ENCODE measurements at regions of chr10 and their contacts with region 1.

Region 1: DNA sequence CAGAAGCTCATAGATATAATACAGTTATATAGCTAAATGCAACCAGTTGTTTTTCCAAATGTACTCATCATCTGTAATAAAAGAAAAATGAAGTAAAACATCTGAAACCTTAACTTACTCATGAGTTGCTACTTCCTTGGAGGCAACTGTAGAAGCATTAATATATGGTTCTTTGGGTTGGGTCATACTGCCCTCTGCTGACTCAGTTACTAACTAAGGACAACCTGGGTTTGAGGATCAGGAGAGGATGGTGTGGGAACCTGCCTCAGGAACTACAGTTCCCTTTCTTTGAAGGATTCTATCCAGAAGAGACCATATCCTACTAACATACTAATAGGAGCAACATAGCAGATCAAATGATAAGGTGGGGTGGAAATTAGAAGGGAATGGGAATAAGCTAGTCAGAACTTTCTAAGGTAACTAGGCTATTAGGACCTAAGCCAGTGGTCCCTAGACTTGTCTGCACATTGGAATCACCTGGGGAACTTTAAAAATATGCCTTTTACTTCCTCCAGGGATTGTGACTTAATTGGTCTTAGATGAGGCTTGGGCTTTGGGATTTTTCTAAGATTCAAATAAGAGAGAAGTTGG is 20.7 kb downstream of the COX15 start:
- DNase-seq: peak in 1 of 2 donors; percentile 34
- H3K4me3 ChIP-seq: no peak overlapping the region
- CTCF ChIP-seq: no peak
- POLR2A ChIP-seq: no peak

Region 2: GRCh38 chr10:99551158-99551557 is 160.1 kb before region 1 on chr10:
- intact Hi-C with region 1: loop called (anchors 10 kb)
- DNase-seq: no peak
- H3K4me3 ChIP-seq: no peak overlapping the region
- CTCF ChIP-seq: no peak
- POLR2A ChIP-seq: no peak

Region 3: GRCh38 chr10:99595770-99596465 is 115.3 kb before region 1 on chr10:
- intact Hi-C with region 1: no loop called
- DNase-seq: peak in 1 of 2 donors; percentile 64
- H3K4me3 ChIP-seq: no peak overlapping the region
- CTCF ChIP-seq: no peak
- POLR2A ChIP-seq: no peak

Region 4: GRCh38 chr10:99630439-99630838 is 80.8 kb before region 1 on chr10:
- intact Hi-C with region 1: loop called (anchors 10 kb)
- DNase-seq: no peak
- H3K4me3 ChIP-seq: no peak overlapping the region
- CTCF ChIP-seq: no peak
- POLR2A ChIP-seq: no peak